Activated B cell treated with CpG ODN at 0.5 μM for 24 hours (primary cell): ENCODE measurements at regions of chr16 and their contacts with region 1.

Region 1: DNA sequence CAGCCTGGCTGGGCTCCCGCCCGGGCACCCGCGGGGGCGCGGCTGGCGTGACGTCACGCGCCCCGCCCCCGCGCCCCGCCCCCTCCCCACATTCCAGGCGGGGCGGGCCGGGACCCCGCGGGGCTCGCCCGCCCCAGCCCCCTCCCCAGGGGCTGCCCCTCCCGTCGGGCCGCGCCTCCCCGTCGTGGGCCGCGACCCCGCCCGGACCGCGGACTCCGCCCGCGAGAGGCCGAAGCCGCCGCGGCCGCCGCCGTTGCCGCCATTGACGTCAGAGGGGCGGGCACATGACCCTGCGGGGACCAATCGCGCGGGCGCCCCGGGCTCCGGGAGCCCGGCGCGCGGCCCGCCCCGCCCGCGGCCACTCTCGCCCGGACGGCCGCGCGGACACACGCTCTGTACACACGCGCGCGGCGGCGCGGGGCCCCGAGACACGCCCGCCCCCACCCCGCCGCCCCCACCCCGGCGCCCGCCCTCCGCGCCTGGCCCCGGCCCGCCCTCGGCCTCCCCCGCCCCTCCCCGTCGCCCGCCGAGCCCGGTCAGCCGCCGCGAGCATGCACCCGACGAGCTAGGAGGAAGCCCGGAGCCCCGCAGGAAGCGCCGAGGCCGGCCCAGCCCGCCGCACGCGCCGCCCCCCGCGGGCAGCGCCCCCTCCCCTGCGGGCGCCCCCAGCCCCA is at the start of gene CMIP:
- DNase-seq: peak; percentile 88
- ATAC-seq: peak; percentile 82
- H3K4me3 Mint-ChIP-seq: peak within 1 kb of the TSS; percentile 87
- H3K27ac Mint-ChIP-seq: peak within 1 kb of the TSS; percentile 79
- H3K4me1 Mint-ChIP-seq: peaks cover 43% of the 10 kb centered on the region
- H3K27me3 Mint-ChIP-seq: no peaks in the 10 kb centered on the region
- CTCF ChIP-seq: no peak
- total RNA-seq, gene CMIP: 62.4 and 76.3 TPM in 2 replicates

Region 2: DNA sequence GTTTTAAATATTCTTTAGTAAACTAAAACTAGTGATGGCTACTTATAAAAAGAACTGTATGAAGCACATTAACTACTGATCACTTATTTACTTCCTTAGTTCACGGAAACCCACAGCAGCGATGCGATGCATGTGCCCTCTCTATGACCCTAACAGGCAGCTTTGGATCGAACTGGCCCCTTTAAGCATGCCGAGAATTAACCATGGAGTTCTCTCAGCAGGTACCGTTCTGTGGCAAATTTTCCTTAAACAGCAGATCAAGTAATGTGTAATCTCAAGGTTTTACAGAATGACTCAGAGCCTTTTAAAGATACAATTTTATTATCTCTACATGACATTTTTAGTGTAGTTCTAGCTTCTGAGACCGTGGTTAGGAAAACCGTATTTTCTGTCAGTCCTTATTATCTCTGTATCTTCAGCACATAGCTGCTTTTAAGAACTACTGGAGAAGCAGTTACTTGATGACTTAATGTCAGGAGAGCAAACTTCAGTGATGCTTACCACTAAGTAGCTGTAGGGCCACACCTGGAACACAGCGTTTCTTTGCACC is 86.8 kb before region 1 on chr16:
- CTCF ChIA-PET with region 1: no interaction called
- POLR2A ChIA-PET with region 1: no interaction called
- intact Hi-C with region 1: no loop called
- DNase-seq: no peak
- ATAC-seq: no peak
- H3K4me3 Mint-ChIP-seq: no peak overlapping the region
- H3K27ac Mint-ChIP-seq: no peak overlapping the region
- H3K4me1 Mint-ChIP-seq: no peaks in the 10 kb centered on the region
- H3K27me3 Mint-ChIP-seq: no peaks in the 10 kb centered on the region
- CTCF ChIP-seq: no peak

Region 3: GRCh38 chr16:81429045-81429521 is 15.5 kb before region 1 on chr16:
- CTCF ChIA-PET with region 1: interaction called, 3 read pairs
- POLR2A ChIA-PET with region 1: interaction called, 9 read pairs
- intact Hi-C with region 1: loop called (anchors 1 kb)
- DNase-seq: no peak
- ATAC-seq: peak; percentile 49
- H3K4me3 Mint-ChIP-seq: no peak overlapping the region
- H3K27ac Mint-ChIP-seq: peak overlapping the region; percentile 5
- H3K4me1 Mint-ChIP-seq: peaks cover 43% of the 10 kb centered on the region
- H3K27me3 Mint-ChIP-seq: no peaks in the 10 kb centered on the region
- CTCF ChIP-seq: no peak

Region 4: GRCh38 chr16:81469710-81470535 is 25.3 kb after region 1 on chr16:
- CTCF ChIA-PET with region 1: interaction called, 3 read pairs
- POLR2A ChIA-PET with region 1: interaction called, 19 read pairs
- intact Hi-C with region 1: no loop called
- DNase-seq: no peak
- ATAC-seq: peak; percentile 88
- H3K4me3 Mint-ChIP-seq: peak overlapping the region; percentile 66
- H3K27ac Mint-ChIP-seq: peak overlapping the region; percentile 84
- H3K4me1 Mint-ChIP-seq: peaks cover 82% of the 10 kb centered on the region
- H3K27me3 Mint-ChIP-seq: no peaks in the 10 kb centered on the region
- CTCF ChIP-seq: no peak